Activated CD4-positive, alpha-beta memory T cell treated with anti-CD3 and anti-CD28 coated beads for 36 hours (primary cell): ENCODE measurements at regions of chr22 and their contacts with region 1.

Region 1: GRCh38 chr22:38872172-38872830 is at the start of gene CBX6:
- DNase-seq: peak; percentile 96
- H3K4me3 Mint-ChIP-seq: peak within 1 kb of the TSS; percentile 93
- H3K27ac Mint-ChIP-seq: peak within 1 kb of the TSS; percentile 91
- H3K4me1 Mint-ChIP-seq: peaks cover 53% of the 10 kb centered on the region
- H3K27me3 Mint-ChIP-seq: no peaks in the 10 kb centered on the region
- total RNA-seq, gene CBX6: 116 to 117 TPM

Region 2: GRCh38 chr22:38706101-38706900 is 166.0 kb before region 1 on chr22:
- CTCF ChIA-PET with region 1: no interaction called
- POLR2A ChIA-PET with region 1: no interaction called
- intact Hi-C with region 1: no loop called
- DNase-seq: peak; percentile 52
- H3K4me3 Mint-ChIP-seq: peak overlapping the region; percentile 92
- H3K27ac Mint-ChIP-seq: peak overlapping the region; percentile 91
- H3K4me1 Mint-ChIP-seq: peaks cover 55% of the 10 kb centered on the region
- H3K27me3 Mint-ChIP-seq: peaks cover under 1% of the 10 kb centered on the region

Region 3: GRCh38 chr22:38766076-38766777 is 106.1 kb before region 1 on chr22:
- CTCF ChIA-PET with region 1: interaction called, 21 read pairs
- POLR2A ChIA-PET with region 1: no interaction called
- intact Hi-C with region 1: no loop called
- DNase-seq: peak; percentile 55
- H3K4me3 Mint-ChIP-seq: no peak overlapping the region
- H3K27ac Mint-ChIP-seq: no peak overlapping the region
- H3K4me1 Mint-ChIP-seq: no peaks in the 10 kb centered on the region
- H3K27me3 Mint-ChIP-seq: no peaks in the 10 kb centered on the region

Region 4: DNA sequence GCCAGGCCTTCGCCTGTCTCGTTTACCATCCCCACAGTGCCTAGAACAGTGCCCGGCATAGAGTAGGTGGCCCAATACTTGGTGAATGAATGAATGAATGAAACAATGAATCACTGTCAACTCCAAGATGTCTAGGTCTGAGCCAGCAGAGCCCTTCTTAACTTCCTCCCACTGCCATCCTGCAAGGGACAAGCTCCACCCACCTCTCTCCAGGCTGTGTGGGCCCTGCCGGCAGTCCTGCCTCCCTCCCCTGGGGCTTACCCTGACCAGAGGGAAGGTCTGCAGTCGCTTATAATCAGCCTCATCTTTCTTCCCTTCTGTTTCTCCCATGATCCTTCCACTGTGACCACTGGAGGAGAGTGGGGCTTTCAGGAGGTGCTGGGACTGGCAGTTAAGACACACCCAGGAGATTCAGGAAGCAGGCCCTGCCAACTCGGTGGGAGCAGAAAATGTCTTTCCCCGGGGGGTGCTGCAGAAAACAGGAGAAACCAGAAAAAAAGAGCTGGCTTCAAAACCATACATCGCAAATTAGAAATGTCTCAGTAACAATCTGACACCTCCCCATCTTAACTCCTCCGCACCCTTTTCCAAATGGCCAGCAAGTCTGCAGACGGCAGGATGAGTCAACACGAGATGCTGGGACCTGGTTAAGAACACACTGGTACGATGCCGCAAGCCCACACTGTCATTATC is 89.8 kb before region 1 on chr22:
- CTCF ChIA-PET with region 1: no interaction called
- POLR2A ChIA-PET with region 1: no interaction called
- intact Hi-C with region 1: no loop called
- DNase-seq: peak; percentile 28
- H3K4me3 Mint-ChIP-seq: no peak overlapping the region
- H3K27ac Mint-ChIP-seq: peak overlapping the region; percentile 53
- H3K4me1 Mint-ChIP-seq: peaks cover 4% of the 10 kb centered on the region
- H3K27me3 Mint-ChIP-seq: no peaks in the 10 kb centered on the region

Region 5: GRCh38 chr22:38927033-38927781 is 54.9 kb after region 1 on chr22:
- CTCF ChIA-PET with region 1: interaction called, 29 read pairs
- POLR2A ChIA-PET with region 1: no interaction called
- intact Hi-C with region 1: loop called (anchors 2 kb)
- DNase-seq: peak; percentile 78
- H3K4me3 Mint-ChIP-seq: peak overlapping the region; percentile 42
- H3K27ac Mint-ChIP-seq: no peak overlapping the region
- H3K4me1 Mint-ChIP-seq: peaks cover 3% of the 10 kb centered on the region
- H3K27me3 Mint-ChIP-seq: peaks cover 26% of the 10 kb centered on the region

Region 6: GRCh38 chr22:38981992-38982927 is 110.0 kb after region 1 on chr22 and contains the start of gene APOBEC3B:
- CTCF ChIA-PET with region 1: interaction called, 18 read pairs
- POLR2A ChIA-PET with region 1: interaction called, 4 read pairs
- intact Hi-C with region 1: loop called (anchors 1 kb)
- DNase-seq: peak; percentile 90
- H3K4me3 Mint-ChIP-seq: peak within 1 kb of the TSS; percentile 64
- H3K27ac Mint-ChIP-seq: peak within 1 kb of the TSS; percentile 83
- H3K4me1 Mint-ChIP-seq: peaks cover 55% of the 10 kb centered on the region
- H3K27me3 Mint-ChIP-seq: no peaks in the 10 kb centered on the region
- total RNA-seq, gene APOBEC3B: 43.9 to 44.3 TPM

Region 7: DNA sequence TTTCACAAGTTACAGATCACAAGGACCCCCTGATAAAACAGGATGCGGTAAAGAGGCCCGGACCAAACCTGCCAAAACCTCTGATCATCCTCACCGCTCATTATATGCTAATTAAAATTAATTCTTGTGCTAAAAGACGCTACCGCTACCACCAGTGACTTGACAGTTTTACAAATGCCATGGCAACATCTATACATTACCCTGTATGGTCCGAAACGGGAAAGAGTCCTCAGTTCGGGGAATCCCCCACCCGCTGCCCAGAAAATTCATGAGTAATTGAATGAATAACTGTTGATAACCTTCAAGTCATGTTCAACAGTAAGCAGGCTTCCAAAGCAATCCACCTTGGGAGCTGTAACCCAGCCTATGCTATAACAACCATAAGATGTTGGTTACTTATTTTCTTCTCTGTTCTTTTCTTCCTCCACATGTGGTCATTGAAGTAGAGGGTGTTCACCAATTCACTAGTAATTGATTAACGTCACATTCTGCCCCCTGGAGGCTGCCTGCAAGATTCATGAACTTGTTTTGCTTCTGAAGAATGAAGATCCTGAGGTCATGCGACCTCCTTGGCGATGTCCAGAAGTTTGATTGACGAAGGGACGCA is 245.4 kb after region 1 on chr22:
- CTCF ChIA-PET with region 1: interaction called, 18 read pairs
- POLR2A ChIA-PET with region 1: interaction called, 5 read pairs
- intact Hi-C with region 1: loop called (anchors 2 kb)
- DNase-seq: peak; percentile 89
- H3K4me3 Mint-ChIP-seq: peak overlapping the region; percentile 11
- H3K27ac Mint-ChIP-seq: peak overlapping the region; percentile 95
- H3K4me1 Mint-ChIP-seq: peaks cover 62% of the 10 kb centered on the region
- H3K27me3 Mint-ChIP-seq: no peaks in the 10 kb centered on the region

Region 8: GRCh38 chr22:39319270-39320022 is 447.1 kb after region 1 on chr22 and contains the start of gene RPL3:
- CTCF ChIA-PET with region 1: interaction called, 6 read pairs
- POLR2A ChIA-PET with region 1: interaction called, 9 read pairs
- intact Hi-C with region 1: loop called (anchors 2 kb)
- DNase-seq: peak; percentile 97
- H3K4me3 Mint-ChIP-seq: peak within 1 kb of the TSS; percentile 100
- H3K27ac Mint-ChIP-seq: peak within 1 kb of the TSS; percentile 99
- H3K4me1 Mint-ChIP-seq: peaks cover 37% of the 10 kb centered on the region
- H3K27me3 Mint-ChIP-seq: no peaks in the 10 kb centered on the region
- total RNA-seq, gene RPL3: 2,986 to 3,013 TPM